ENCODE measurements at regions of chr14 and their contacts with region 1.

Region 1: GRCh38 chr14:78314484-78314883 is 144.3 kb downstream of the NRXN3 start:
- DNase-seq: no peak
- H3K4me3 ChIP-seq: no peak overlapping the region
- H3K4me3 Mint-ChIP-seq: no peak overlapping the region
- H3K27ac Mint-ChIP-seq: no peak overlapping the region
- H3K4me1 ChIP-seq: no peaks in the 10 kb centered on the region
- H3K4me1 Mint-ChIP-seq: no peaks in the 10 kb centered on the region
- H3K27me3 ChIP-seq: no peaks in the 10 kb centered on the region
- H3K27me3 Mint-ChIP-seq: peaks cover 14% of the 10 kb centered on the region
- CTCF ChIP-seq: no peak

Region 2: DNA sequence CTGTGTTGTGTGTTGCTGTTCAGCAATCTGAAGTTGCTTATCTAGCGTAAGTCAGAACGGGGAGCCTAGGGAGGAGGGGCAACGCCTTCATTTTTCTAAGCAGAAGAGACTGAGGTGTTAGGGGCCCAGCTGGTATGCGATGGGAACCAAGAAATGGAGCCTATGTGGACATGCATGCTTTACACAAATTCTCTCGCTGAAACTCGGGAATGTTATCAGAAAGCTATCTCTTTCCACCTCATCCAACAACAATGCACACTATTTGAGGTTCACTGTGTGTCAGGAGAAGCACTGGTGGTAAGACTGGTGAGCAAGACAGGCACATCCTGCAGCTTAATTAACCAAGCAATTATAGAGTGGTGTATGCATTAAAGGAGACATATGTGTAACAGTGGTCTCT is 54.7 kb before region 1 on chr14:
- CTCF ChIA-PET with region 1: interaction called, 13 read pairs
- POLR2A ChIA-PET with region 1: no interaction called
- intact Hi-C with region 1: no loop called
- DNase-seq: no peak
- H3K4me3 ChIP-seq: no peak overlapping the region
- H3K4me3 Mint-ChIP-seq: no peak overlapping the region
- H3K27ac Mint-ChIP-seq: no peak overlapping the region
- H3K4me1 ChIP-seq: no peaks in the 10 kb centered on the region
- H3K4me1 Mint-ChIP-seq: no peaks in the 10 kb centered on the region
- H3K27me3 ChIP-seq: no peaks in the 10 kb centered on the region; the same call in 1 of the 2 replicates
- H3K27me3 Mint-ChIP-seq: peaks cover 14% of the 10 kb centered on the region
- CTCF ChIP-seq: no peak